GM10248 (cell line): ENCODE measurements at regions of chr7 and their contacts with region 1.

Region 1: DNA sequence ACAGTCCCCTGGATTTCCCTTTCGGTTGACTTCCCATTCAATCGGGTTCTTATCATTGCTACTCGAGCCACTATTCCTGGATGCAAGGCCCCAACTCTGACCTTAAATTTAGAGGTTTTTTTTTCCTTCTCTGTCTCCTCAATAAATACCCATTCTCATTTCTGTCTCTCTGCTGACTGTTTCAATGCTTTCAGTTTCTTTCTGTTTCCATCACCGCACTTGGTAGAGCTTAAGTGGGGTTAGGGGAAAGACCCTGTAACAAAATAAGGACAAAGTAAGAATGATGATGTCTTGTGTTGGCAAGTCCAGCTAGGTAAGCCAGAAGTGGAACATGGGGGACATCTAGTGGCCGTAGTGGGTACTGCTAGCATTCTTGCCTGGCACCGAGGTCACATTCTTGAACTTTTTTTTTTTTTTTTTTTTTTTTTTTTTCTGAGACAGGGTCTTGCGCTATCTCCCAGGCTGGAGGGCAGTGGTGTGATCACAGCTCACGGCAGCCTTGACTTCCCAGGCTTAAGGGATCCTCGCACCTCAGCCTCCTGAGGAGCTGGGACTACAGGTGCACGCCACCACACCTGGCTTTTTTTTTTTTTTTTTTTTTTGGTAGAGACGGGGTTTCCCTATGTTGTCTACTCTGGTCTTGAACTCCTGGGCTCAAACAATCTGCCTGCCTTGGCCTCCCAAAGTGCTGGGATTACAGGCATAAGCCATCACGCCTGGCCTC is 40.3 kb downstream of the ZC3HC1 start:
- DNase-seq: peak; percentile 84
- CTCF ChIP-seq: peak; percentile 84

Region 2: DNA sequence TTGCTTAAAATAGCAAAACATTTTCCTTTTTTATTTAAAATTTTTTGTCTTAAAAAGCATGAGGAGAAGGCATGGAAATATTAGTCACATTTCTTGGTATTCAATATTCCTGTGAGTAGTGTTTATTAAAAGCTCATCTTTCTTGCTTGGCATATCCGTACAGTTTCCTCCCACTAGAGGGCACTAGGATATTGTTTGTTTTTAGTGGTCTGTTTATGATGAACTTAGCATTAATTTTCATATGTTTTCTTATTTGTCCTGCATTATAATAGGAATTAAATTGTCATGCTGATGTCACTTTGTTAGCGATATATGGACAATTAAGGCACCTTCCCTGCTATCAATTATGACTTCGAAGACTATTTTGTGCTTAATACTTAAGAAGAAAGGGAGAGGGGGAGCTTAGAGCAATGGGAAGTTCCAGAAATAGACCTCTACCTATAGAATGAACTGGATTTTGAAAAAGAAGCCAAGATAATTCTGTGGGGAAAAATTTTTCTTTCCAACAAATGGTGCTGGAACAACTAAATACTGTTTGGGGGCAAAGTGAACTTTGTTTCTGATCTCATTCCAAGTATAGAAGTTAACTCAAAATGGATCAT is 667.7 kb before region 1 on chr7:
- CTCF ChIA-PET with region 1: interaction called, 13 read pairs
- POLR2A ChIA-PET with region 1: no interaction called
- DNase-seq: peak; percentile 44
- CTCF ChIP-seq: peak; percentile 70

Region 3: GRCh38 chr7:129664029-129665012 is 346.5 kb before region 1 on chr7:
- CTCF ChIA-PET with region 1: interaction called, 11 read pairs
- POLR2A ChIA-PET with region 1: no interaction called
- DNase-seq: peak; percentile 50
- CTCF ChIP-seq: peak; percentile 46

Region 4: GRCh38 chr7:129825496-129826267 is 185.2 kb before region 1 on chr7:
- CTCF ChIA-PET with region 1: interaction called, 39 read pairs
- POLR2A ChIA-PET with region 1: no interaction called
- DNase-seq: peak; percentile 91
- CTCF ChIP-seq: peak; percentile 66

Region 5: GRCh38 chr7:129952653-129953560 is 57.9 kb before region 1 on chr7 and contains the start of gene UBE2H:
- CTCF ChIA-PET with region 1: interaction called, 21 read pairs
- POLR2A ChIA-PET with region 1: interaction called, 3 read pairs
- DNase-seq: peak; percentile 96
- CTCF ChIP-seq: no peak

Region 6: DNA sequence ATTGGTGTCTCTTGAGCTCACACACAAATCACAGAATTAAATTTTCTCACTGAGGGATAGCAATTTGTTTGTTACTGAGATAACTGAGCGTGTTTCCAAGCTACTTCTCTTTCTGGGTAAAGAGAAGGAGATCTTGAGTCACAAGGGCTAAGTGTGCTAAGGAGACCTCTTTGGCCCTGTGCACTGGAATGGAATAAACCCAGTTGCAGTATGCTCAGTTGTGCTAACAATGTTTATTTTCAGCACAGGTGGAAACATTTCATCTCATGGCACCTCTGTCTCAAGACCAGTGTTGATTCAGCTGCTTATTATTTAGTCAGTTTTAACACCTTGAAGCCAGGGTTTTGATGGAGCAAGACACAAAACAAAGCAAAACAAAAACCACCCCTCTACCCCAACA is 35.5 kb before region 1 on chr7:
- CTCF ChIA-PET with region 1: no interaction called
- POLR2A ChIA-PET with region 1: no interaction called
- DNase-seq: no peak
- CTCF ChIP-seq: no peak

Region 7: DNA sequence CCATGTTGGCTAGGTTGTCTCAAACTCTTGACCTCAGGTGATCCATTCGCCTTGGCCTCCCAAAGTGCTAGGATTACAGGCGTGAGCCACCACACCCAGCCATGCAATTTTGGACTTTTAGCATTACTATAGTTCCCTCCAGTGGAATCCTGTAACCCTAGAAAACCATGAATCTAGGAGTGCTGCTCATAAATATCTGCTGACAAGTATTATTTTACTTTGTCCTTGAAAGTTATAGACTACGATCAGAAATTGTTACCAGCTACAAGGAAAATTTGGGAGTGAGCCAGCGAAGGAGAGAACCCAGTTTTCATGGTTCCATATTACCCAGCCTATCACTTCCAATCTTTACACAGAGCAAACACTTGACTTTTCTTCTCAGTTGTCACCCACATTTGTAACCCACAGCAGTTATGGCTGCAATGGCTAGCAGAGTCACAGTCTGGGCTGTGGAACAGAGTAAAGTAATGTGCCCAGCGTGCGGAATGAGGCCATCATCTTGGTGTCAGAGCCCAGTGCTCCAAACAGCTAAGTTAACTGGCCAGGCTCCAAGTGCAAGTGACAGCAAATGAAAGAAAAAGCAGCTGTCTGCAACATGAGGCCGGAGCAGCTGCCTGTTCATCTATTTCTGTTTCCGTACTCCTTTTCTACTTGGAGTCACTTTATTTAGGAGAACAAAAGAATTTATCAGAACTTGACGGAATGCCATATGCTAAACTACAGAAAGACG is 10.4 kb after region 1 on chr7:
- CTCF ChIA-PET with region 1: interaction called, 5 read pairs
- POLR2A ChIA-PET with region 1: interaction called, 11 read pairs
- DNase-seq: no peak
- CTCF ChIP-seq: no peak

Region 8: DNA sequence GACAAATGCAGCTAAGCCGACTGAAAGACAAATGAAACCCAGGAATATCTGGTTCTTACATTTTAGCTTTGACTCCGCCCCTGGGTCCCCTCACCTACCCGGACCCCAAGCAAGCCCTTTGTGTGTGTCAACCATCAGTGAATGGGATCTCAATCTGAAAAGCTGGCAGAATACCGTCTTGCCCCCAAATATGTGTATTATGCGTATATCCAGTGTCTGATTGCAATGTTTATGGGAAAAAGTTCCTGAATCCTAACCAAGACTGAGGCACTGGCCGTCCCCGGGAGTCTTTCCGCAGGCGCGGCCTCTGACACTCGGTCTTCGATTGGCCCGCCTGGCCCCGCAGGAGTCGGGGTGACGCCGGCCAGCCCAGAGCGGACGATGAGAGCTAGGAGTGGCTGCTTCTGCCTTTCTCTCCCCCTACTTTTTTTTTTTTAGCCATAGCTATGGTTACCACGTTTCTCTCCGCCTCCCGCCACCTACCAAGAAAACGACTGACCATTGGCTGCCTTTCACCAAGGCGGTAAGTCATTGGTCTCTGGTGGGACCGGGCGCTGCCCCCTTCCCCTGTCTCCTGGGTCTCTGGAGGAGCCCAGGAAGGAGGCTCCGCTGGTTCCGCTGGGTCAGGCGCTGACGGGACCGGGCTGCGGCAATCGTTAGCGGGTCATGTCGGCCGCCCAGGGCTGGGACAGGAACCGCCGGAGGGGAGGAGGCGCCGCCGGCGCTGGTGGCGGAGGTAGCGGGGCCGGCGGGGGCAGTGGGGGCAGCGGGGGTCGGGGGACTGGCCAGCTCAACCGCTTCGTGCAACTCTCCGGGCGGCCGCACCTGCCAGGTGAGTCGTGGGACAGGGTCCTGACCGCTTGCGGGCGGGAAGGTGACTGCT is 59.4 kb after region 1 on chr7 and contains the start of gene KLHDC10:
- CTCF ChIA-PET with region 1: no interaction called
- POLR2A ChIA-PET with region 1: interaction called, 10 read pairs
- DNase-seq: peak; percentile 98
- CTCF ChIP-seq: no peak